HepG2 (cell line): ENCODE measurements at regions of chr3 and their contacts with region 1.

Region 1: DNA sequence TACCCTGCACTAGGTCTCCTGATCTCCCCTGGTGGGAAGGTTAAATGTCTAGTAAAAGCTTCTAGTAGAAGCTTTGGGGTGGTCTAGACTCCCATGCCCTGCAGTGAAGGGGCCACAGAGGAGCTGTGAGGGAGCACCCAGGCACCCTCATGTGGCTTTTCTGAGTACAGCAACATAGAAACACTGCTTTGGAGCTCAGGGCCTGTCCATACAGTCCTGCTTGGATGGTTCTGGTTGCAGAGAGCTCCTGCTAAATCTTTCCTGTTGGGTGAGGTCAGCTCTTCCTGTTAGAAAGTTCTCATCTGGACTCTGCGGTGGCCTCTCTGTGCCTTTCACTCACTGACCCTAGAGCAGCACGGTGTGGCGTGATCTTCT is 47.8 kb downstream of the GPD1L start:
- DNase-seq: peak; percentile 18
- ATAC-seq: peak; percentile 98
- H3K4me3 ChIP-seq: no peak overlapping the region
- H3K27ac ChIP-seq: no peak overlapping the region
- H3K4me1 ChIP-seq: no peaks in the 10 kb centered on the region
- H3K27me3 ChIP-seq: no peaks in the 10 kb centered on the region; a peak in 1 of 5 replicates
- CTCF ChIP-seq: peak; percentile 59
- EP300 ChIP-seq: no peak
- POLR2A ChIP-seq: no peak
- RAD21 ChIP-seq: 0 out of 2 replicates have a peak, but pooled peaks have one; percentile 42

Region 2: DNA sequence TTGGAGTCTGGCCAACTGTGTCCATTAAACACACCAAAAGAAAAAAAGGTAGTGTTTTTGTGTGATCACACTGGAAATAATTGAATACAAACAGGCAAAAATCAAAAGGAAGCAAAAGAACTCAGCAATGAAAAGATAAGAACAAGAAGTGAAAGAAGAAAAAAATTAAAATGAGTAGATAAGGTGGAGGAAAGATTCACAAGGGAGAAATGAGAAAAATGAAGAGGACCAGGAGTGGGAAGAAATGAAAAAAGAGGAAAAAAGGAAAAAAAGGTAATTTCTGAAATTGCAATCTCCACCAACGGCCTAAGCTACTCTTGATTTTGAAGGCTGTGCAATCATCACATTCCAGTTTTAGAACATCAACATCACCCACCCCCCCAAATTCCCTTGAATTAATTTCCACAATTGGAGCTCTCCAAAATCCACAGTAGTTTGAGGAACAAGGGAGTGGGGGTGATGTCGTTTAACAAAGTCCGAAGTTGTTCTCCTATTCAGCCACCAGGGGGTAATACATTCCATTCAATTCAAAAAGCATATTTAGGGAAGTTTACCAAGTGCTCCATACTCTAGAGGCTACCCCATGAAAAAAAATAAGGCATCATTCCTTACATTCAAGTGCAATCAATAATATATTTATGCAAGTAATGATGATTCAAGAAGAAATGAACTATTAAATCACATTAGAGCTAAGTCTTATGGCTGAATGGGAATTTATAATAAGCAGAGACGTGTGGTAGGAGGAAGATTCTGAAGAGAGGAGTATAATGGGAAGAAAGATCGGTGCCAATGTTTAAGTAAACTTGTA is 135.2 kb before region 1 on chr3:
- CTCF ChIA-PET with region 1: no interaction called
- POLR2A ChIA-PET with region 1: no interaction called
- in situ Hi-C with region 1: no loop called
- intact Hi-C with region 1: loop called (anchors 1 kb)
- DNase-seq: peak; percentile 52
- ATAC-seq: peak; percentile 85
- H3K4me3 ChIP-seq: no peak overlapping the region; a peak in 1 of 6 replicates
- H3K27ac ChIP-seq: no peak overlapping the region
- H3K4me1 ChIP-seq: peaks cover 19% of the 10 kb centered on the region
- H3K27me3 ChIP-seq: no peaks in the 10 kb centered on the region
- CTCF ChIP-seq: peak; percentile 74
- EP300 ChIP-seq: no peak
- POLR2A ChIP-seq: no peak
- RAD21 ChIP-seq: peak; percentile 59; the same call in 1 of the 2 replicates

Region 3: GRCh38 chr3:32177702-32178198 is 23.6 kb after region 1 on chr3:
- CTCF ChIA-PET with region 1: no interaction called
- POLR2A ChIA-PET with region 1: no interaction called
- in situ Hi-C with region 1: no loop called
- intact Hi-C with region 1: no loop called
- DNase-seq: peak; percentile 88
- ATAC-seq: peak; percentile 97
- H3K4me3 ChIP-seq: peak overlapping the region in 2 of 3 experiments; percentile 49 to 65; a peak in 5 of 6 replicates
- H3K27ac ChIP-seq: no peak overlapping the region
- H3K4me1 ChIP-seq: peaks cover 27% of the 10 kb centered on the region
- H3K27me3 ChIP-seq: peaks cover 0 to 4% of the 10 kb centered on the region in 2 experiments; a peak in 2 of 5 replicates
- CTCF ChIP-seq: peak; percentile 98
- EP300 ChIP-seq: 0 out of 4 replicates have a peak, but pooled peaks of 1 of the 2 experiments have one; percentile 36
- POLR2A ChIP-seq: no peak
- RAD21 ChIP-seq: peak; percentile 89

Region 4: GRCh38 chr3:32391643-32392535 is 237.7 kb after region 1 on chr3 and contains the start of gene CMTM7:
- CTCF ChIA-PET with region 1: no interaction called
- POLR2A ChIA-PET with region 1: no interaction called
- in situ Hi-C with region 1: no loop called
- intact Hi-C with region 1: no loop called
- DNase-seq: peak; percentile 39
- ATAC-seq: peak; percentile 91
- H3K4me3 ChIP-seq: peak within 1 kb of the TSS; percentile 55 to 90 (median 85)
- H3K27ac ChIP-seq: peak within 1 kb of the TSS; percentile 84
- H3K4me1 ChIP-seq: peaks cover 26% of the 10 kb centered on the region
- H3K27me3 ChIP-seq: no peaks in the 10 kb centered on the region; a peak in 1 of 5 replicates
- CTCF ChIP-seq: no peak; the same call in 1 of the 2 replicates
- EP300 ChIP-seq: no peak
- POLR2A ChIP-seq: peak; percentile 70 to 88
- RAD21 ChIP-seq: no peak
- total RNA-seq, gene CMTM7: 16.3 and 20.9 TPM in 2 replicates